Panc1 (cell line): ENCODE measurements at regions of chr19 and their contacts with region 1.

Region 1: GRCh38 chr19:34067861-34068271 is 104.4 kb upstream of the LSM14A start:
- DNase-seq: peak; percentile 50
- ATAC-seq: peak; percentile 92
- H3K4me3 ChIP-seq: no peak overlapping the region; a peak in 1 of 4 replicates
- H3K27ac ChIP-seq: no peak overlapping the region
- H3K4me1 ChIP-seq: 0 out of 2 replicates have a peak, but pooled peaks cover 3% of the 10 kb centered on the region
- H3K27me3 ChIP-seq: no peaks in the 10 kb centered on the region
- CTCF ChIP-seq: no peak

Region 2: DNA sequence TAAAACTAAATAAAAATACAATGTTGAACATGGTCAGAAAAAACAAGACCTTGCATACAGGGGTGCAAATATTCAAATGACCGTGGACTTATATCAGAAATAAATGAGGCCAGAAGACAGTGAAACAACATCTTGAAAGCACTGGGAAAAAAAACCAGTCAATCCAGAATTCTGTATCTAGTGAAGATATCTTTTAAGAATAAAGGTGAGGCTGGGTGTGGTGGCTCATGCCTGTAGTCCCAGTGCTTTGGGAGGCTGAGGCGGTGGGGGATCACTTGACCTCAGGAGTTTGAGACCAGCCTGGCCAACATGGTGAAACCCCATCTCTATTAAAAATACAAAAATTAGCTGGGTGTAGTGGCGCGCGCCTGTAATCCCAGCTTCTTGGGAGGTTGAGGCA is 750.3 kb before region 1 on chr19:
- CTCF ChIA-PET with region 1: no interaction called
- POLR2A ChIA-PET with region 1: interaction called, 11 read pairs
- in situ Hi-C with region 1: no loop called
- intact Hi-C with region 1: no loop called
- DNase-seq: no peak
- ATAC-seq: no peak
- H3K4me3 ChIP-seq: no peak overlapping the region
- H3K27ac ChIP-seq: no peak overlapping the region
- H3K4me1 ChIP-seq: no peaks in the 10 kb centered on the region
- H3K27me3 ChIP-seq: no peaks in the 10 kb centered on the region
- CTCF ChIP-seq: no peak

Region 3: GRCh38 chr19:33595783-33596182 is 472.1 kb before region 1 on chr19:
- CTCF ChIA-PET with region 1: no interaction called
- POLR2A ChIA-PET with region 1: interaction called, 10 read pairs
- in situ Hi-C with region 1: no loop called
- intact Hi-C with region 1: no loop called
- DNase-seq: no peak
- ATAC-seq: no peak
- H3K4me3 ChIP-seq: no peak overlapping the region
- H3K27ac ChIP-seq: no peak overlapping the region
- H3K4me1 ChIP-seq: no peaks in the 10 kb centered on the region
- H3K27me3 ChIP-seq: peaks cover 8% of the 10 kb centered on the region; the same call in 1 of the 2 replicates
- CTCF ChIP-seq: no peak